Endothelial cell of umbilical vein (primary cell): ENCODE measurements at regions of chr20 and their contacts with region 1.

Region 1: GRCh38 chr20:1802385-1803060 is 92.7 kb upstream of the SIRPA start:
- DNase-seq: peak; percentile 76
- H3K4me3 ChIP-seq: peak overlapping the region; percentile 49 to 66 (median 56)
- H3K27ac ChIP-seq: peak overlapping the region; percentile 42
- H3K4me1 ChIP-seq: peaks cover 13% of the 10 kb centered on the region
- H3K27me3 ChIP-seq: peaks cover 3 to 5% of the 10 kb centered on the region in 2 experiments
- CTCF ChIP-seq: peak; percentile 64 to 84
- POLR2A ChIP-seq: no peak

Region 2: DNA sequence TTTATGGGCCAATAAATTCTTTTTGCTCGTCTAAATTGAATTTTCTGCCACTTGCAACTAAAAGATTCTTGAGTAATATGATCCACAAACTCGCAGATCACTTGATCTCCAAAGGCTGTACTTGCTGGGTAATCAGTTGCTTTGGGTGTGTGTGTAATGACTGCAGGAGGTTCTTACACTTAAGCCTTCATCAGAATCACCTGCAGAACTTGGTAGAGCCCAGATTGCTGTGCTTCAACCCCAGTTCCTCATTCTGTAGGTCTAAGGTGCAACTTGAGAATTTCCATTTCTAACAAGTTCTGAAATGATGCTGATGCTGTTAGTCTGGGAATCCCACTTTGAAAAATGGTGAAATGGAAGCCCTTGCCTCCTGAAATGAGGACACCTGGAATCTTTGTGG is 396.7 kb before region 1 on chr20:
- CTCF ChIA-PET with region 1: no interaction called
- POLR2A ChIA-PET with region 1: no interaction called
- dilution Hi-C with region 1: no loop called
- intact Hi-C with region 1: no loop called
- DNase-seq: no peak
- H3K4me3 ChIP-seq: no peak overlapping the region
- H3K27ac ChIP-seq: no peak overlapping the region
- H3K4me1 ChIP-seq: peaks cover 5% of the 10 kb centered on the region
- H3K27me3 ChIP-seq: no peaks in the 10 kb centered on the region
- CTCF ChIP-seq: no peak
- POLR2A ChIP-seq: no peak

Region 3: DNA sequence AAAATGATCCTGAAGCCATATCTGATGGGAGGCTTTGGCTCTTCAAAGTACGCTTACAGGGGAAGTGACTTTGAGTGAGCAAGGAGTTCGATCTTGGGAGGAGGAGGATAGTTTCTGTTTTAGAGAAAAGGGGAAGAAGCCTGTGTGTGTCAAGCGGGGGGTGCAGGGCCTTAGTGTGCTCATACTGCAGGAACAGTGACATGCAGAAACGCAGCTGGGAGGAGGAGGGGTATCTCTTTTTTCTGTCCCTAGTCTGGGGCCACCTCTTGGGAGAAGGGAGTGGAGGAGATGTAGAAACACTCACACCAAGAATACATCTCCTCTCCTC is 264.8 kb before region 1 on chr20:
- CTCF ChIA-PET with region 1: no interaction called
- POLR2A ChIA-PET with region 1: no interaction called
- dilution Hi-C with region 1: no loop called
- intact Hi-C with region 1: no loop called
- DNase-seq: no peak
- H3K4me3 ChIP-seq: no peak overlapping the region
- H3K27ac ChIP-seq: no peak overlapping the region
- H3K4me1 ChIP-seq: no peaks in the 10 kb centered on the region
- H3K27me3 ChIP-seq: peaks cover 0 to 2% of the 10 kb centered on the region in 2 experiments
- CTCF ChIP-seq: no peak
- POLR2A ChIP-seq: no peak

Region 4: DNA sequence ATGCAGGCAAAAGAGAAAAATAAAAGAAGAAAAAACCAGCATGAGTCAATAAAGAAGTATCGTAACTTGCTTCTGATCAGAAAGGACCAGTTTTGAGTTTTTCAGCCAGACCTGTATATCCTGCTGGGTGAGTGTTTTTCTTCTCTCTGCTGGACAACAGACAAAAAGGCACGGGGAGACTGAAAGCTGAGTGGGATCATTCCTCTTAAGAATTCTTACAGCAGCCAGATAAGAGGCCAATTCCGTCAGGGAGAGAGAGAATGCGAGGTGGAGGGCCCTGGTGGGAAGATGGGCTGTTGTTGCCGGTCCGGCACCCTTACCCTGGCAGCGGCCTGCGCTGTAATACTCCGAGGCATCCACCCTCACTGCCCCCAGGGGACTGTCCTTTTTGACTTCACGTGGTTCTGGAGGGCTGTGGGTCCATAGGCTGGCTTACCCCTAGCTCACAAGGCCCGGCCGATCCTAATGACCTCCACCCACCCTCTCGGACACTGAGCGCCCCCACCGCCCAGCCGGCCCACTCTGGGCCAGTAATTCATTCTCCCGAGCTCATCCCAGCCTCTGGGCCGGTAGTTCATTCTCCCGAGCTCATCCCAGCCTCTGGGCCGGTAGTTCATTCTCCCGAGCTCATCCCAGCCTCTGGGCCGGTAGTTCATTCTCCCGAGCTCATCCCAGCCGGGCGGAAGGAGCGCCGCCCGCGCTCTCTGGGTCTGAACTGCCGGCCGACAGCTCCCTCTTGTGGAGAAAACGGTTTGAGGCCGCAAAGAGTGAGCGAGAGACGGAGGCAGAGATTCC is 25.6 kb before region 1 on chr20:
- CTCF ChIA-PET with region 1: interaction called, 47 read pairs
- POLR2A ChIA-PET with region 1: no interaction called
- dilution Hi-C with region 1: no loop called
- intact Hi-C with region 1: loop called (anchors 1 kb)
- DNase-seq: peak; percentile 81
- H3K4me3 ChIP-seq: peak overlapping the region; percentile 41 to 88 (median 77)
- H3K27ac ChIP-seq: peak overlapping the region; percentile 38
- H3K4me1 ChIP-seq: peaks cover 7% of the 10 kb centered on the region
- H3K27me3 ChIP-seq: peaks cover 0 to 6% of the 10 kb centered on the region in 2 experiments
- CTCF ChIP-seq: peak; percentile 67 to 85
- POLR2A ChIP-seq: peak; percentile 26

Region 5: DNA sequence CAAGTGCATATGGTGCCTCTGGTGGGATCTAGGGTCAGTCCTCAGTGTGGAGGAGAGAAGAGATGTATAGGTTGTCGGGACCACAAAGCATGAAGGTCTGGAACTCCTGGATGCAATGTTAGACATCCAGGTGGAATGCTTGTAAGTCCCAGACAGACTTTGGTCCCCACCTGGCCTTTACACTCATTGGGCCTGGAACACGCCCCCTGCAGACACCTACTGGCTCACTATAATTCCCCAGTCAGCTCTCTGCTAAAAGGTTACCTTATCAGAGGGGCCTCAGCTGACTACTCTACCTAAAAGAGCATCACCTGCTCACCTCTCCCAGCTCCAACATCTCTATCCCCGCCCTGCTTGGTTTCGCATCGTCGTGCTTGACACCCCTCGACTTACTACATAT is 51.0 kb after region 1 on chr20:
- CTCF ChIA-PET with region 1: interaction called, 10 read pairs
- POLR2A ChIA-PET with region 1: no interaction called
- dilution Hi-C with region 1: no loop called
- intact Hi-C with region 1: no loop called
- DNase-seq: no peak
- H3K4me3 ChIP-seq: no peak overlapping the region
- H3K27ac ChIP-seq: no peak overlapping the region
- H3K4me1 ChIP-seq: no peaks in the 10 kb centered on the region
- H3K27me3 ChIP-seq: peaks cover 10 to 14% of the 10 kb centered on the region in 2 experiments
- CTCF ChIP-seq: no peak
- POLR2A ChIP-seq: no peak

Region 6: GRCh38 chr20:1894951-1895673 is 92.6 kb after region 1 on chr20 and contains the start of gene SIRPA:
- CTCF ChIA-PET with region 1: interaction called, 34 read pairs
- POLR2A ChIA-PET with region 1: no interaction called
- dilution Hi-C with region 1: no loop called
- intact Hi-C with region 1: loop called (anchors 1 kb)
- DNase-seq: peak; percentile 66
- H3K4me3 ChIP-seq: peak within 1 kb of the TSS; percentile 70 to 85 (median 70)
- H3K27ac ChIP-seq: peak within 1 kb of the TSS; percentile 68
- H3K4me1 ChIP-seq: peaks cover 8% of the 10 kb centered on the region
- H3K27me3 ChIP-seq: no peaks in the 10 kb centered on the region
- CTCF ChIP-seq: no peak
- POLR2A ChIP-seq: no peak
- total RNA-seq, gene SIRPA: 58.3 and 59.2 TPM in 2 replicates

Region 7: DNA sequence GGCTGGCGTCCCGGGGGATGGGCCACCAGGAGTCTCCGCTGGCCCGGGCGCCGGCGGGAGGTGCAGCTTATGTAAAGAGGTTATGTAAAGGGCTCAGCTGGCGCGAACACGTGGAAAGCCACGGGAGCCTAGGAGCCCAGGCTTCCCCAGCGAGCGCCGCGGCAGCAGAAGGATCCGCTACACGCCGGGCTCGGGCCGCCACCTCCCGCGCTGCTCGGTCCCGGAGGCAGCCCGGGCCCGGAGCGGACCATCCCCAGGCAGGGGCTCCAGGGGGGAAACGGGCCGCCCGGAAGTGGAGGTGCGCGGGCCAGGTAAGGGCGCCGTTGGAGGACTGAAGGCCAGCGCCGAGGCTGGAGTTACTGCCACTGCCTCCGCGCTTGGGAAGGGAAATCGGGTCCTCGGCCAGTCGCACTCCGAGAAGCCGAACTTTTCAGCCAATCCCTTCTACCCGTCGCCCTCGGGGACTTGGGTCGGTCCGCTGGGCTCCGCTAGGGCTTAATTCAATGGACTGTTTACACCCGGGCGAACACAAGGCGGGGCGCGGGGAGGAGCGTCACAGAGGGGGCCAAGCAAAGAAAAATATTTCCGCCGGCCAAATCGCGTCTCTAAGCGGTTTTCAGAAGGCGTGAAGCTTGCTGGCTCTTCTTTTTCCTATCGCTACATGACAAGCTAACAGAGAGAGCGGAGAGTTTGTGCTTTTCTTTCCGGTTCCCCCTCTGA is 299.5 kb after region 1 on chr20:
- CTCF ChIA-PET with region 1: no interaction called
- POLR2A ChIA-PET with region 1: no interaction called
- dilution Hi-C with region 1: no loop called
- intact Hi-C with region 1: loop called (anchors 5 kb)
- DNase-seq: peak; percentile 90
- H3K4me3 ChIP-seq: peak overlapping the region; percentile 49 to 77 (median 65)
- H3K27ac ChIP-seq: peak overlapping the region; percentile 98
- H3K4me1 ChIP-seq: peaks cover 16% of the 10 kb centered on the region
- H3K27me3 ChIP-seq: peaks cover 0 to 2% of the 10 kb centered on the region in 2 experiments
- CTCF ChIP-seq: no peak
- POLR2A ChIP-seq: peak; percentile 75